ENCODE measurements at regions of chr18 and their contacts with region 1.

Region 1: DNA sequence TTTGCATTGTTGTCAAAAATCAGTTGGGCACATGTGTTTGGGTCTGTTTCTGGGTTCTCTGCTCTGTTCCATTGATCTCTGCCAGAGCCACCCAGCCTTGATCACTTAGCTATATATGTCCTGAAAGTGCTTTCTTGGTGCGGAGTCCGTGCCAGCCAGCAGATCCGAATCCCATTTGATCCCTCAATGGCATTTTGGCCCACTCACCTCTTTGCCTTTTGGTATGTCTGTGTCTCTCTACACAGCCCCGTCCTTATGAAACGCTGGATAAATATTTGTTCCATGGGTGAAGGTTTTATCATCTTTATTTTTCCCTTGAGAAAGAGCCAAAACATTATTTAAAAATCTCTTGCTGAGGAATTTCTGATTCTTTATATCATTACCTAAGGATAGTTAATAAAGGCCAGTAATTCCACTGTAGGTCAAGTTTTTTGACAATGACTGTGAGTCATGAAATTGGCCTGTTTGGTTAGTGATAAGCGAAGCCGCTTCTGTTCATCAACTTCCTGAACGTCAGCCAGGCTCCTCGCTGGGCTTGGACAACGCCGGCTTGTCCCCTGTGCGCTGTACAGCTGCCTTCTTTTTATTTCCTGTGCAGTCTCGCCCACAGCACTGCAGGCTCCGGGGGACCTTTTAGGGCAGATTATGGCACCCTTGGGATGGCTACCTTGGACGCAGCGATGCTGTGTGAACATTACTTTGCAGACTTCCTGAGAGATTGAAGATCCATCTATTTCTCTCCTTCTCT is 24.9 kb downstream of the MTCL1 start:
- DNase-seq: peak; percentile 96
- ATAC-seq: peak; percentile 97
- H3K4me3 ChIP-seq: peak overlapping the region; percentile 48
- H3K27ac ChIP-seq: peak overlapping the region; percentile 82
- H3K4me1 ChIP-seq: peaks cover 19% of the 10 kb centered on the region
- H3K27me3 ChIP-seq: no peaks in the 10 kb centered on the region
- CTCF ChIP-seq: no peak

Region 2: GRCh38 chr18:8443505-8443904 is 286.7 kb before region 1 on chr18:
- CTCF ChIA-PET with region 1: no interaction called
- POLR2A ChIA-PET with region 1: interaction called, 13 read pairs
- intact Hi-C with region 1: no loop called
- DNase-seq: peak; percentile 62
- ATAC-seq: peak; percentile 69
- H3K4me3 ChIP-seq: no peak overlapping the region
- H3K27ac ChIP-seq: no peak overlapping the region
- H3K4me1 ChIP-seq: peaks cover 28% of the 10 kb centered on the region
- H3K27me3 ChIP-seq: no peaks in the 10 kb centered on the region
- CTCF ChIP-seq: no peak

Region 3: GRCh38 chr18:8948471-8949149 is 218.4 kb after region 1 on chr18:
- CTCF ChIA-PET with region 1: interaction called, 3 read pairs
- POLR2A ChIA-PET with region 1: no interaction called
- intact Hi-C with region 1: loop called (anchors 1 kb)
- DNase-seq: peak; percentile 93
- ATAC-seq: peak; percentile 82
- H3K4me3 ChIP-seq: peak overlapping the region; percentile 44
- H3K27ac ChIP-seq: peak overlapping the region; percentile 50
- H3K4me1 ChIP-seq: peaks cover 71% of the 10 kb centered on the region
- H3K27me3 ChIP-seq: no peaks in the 10 kb centered on the region
- CTCF ChIP-seq: no peak

Measured in PC-3 (cell line).